Brain microvascular endothelial cell (primary cell): ENCODE measurements at regions of chr2 and their contacts with region 1.

Region 1: DNA sequence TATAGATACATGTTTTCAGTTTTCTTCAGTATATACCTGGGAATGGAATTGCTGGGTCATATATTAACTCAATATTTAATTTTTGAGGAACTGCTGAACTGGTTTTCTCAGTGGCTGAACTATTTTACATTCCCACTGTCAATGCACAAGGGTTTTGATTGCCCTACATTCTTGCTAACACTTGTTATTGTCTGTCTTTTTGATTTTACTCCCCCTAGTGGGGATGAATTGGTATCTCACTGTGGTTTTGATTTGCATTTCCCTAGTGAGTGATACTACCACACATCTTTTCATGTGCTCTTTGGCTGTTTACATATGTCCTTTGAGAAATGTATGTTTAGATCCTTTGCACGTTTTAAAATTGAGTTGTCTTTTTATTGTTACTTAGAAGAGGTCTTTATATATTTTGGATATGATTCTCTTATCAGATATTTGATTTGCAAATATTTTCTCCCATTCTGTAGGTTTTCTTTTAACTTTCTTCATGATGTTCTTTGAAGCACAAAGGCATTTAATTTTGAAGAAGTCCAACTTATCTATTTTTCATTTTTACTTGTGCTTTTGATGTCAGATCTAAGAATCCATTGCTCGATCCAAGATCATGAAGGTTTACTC is 36.2 kb downstream of the ASB1 start:
- DNase-seq: peak; percentile 56
- H3K4me3 ChIP-seq: no peak overlapping the region
- H3K27ac ChIP-seq: no peak overlapping the region
- H3K27me3 ChIP-seq: no peaks in the 10 kb centered on the region
- CTCF ChIP-seq: peak; percentile 48

Region 2: GRCh38 chr2:238305092-238305862 is 157.6 kb before region 1 on chr2:
- in situ Hi-C with region 1: no loop called
- DNase-seq: no peak
- H3K4me3 ChIP-seq: no peak overlapping the region
- H3K27ac ChIP-seq: no peak overlapping the region
- H3K27me3 ChIP-seq: no peaks in the 10 kb centered on the region
- CTCF ChIP-seq: peak; percentile 51

Region 3: GRCh38 chr2:238370823-238371372 is 92.0 kb before region 1 on chr2:
- in situ Hi-C with region 1: loop called (anchors 25 kb)
- DNase-seq: peak; percentile 67
- H3K4me3 ChIP-seq: no peak overlapping the region
- H3K27ac ChIP-seq: no peak overlapping the region
- H3K27me3 ChIP-seq: no peaks in the 10 kb centered on the region
- CTCF ChIP-seq: peak; percentile 94